Activated CD8-positive, alpha-beta T cell treated with anti-CD3 and anti-CD28 coated beads for 36 hours (primary cell): ENCODE measurements at regions of chr11 and their contacts with region 1.

Region 1: DNA sequence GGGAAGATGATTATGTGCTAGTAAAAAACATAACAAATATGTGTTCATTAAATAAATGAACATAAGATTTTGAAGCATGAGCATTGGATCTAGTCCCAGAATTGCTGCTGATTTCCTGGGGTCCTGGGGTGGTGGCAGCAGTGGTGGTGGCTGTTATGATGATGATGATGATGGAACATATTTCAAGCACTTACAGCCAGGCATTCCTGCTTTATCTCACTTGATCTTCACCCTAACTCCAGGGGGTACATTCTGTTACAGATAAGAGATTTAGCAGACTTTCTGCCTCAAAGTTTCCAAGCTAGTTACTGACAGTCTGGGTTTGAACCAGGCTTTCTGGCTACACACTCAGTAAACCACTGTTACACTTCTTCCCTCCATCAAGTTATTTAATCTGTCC is 5.2 kb downstream of the TRAPPC4 start:
- DNase-seq: no peak
- ATAC-seq: no peak
- H3K4me3 Mint-ChIP-seq: no peak overlapping the region
- H3K27ac Mint-ChIP-seq: peak overlapping the region; percentile 52
- H3K4me1 Mint-ChIP-seq: peaks cover 50% of the 10 kb centered on the region
- H3K27me3 Mint-ChIP-seq: no peaks in the 10 kb centered on the region
- CTCF ChIP-seq: no peak

Region 2: GRCh38 chr11:119044708-119045107 is 21.0 kb after region 1 on chr11:
- CTCF ChIA-PET with region 1: no interaction called
- POLR2A ChIA-PET with region 1: interaction called, 10 read pairs
- intact Hi-C with region 1: no loop called
- DNase-seq: no peak
- ATAC-seq: no peak
- H3K4me3 Mint-ChIP-seq: no peak overlapping the region
- H3K27ac Mint-ChIP-seq: no peak overlapping the region
- H3K4me1 Mint-ChIP-seq: peaks cover 7% of the 10 kb centered on the region
- H3K27me3 Mint-ChIP-seq: no peaks in the 10 kb centered on the region
- CTCF ChIP-seq: peak; percentile 35

Region 3: GRCh38 chr11:119205574-119206510 is 182.1 kb after region 1 on chr11 and contains the start of gene CBL:
- CTCF ChIA-PET with region 1: no interaction called
- POLR2A ChIA-PET with region 1: no interaction called
- intact Hi-C with region 1: no loop called
- DNase-seq: peak; percentile 97
- ATAC-seq: peak; percentile 91
- H3K4me3 Mint-ChIP-seq: peak within 1 kb of the TSS; percentile 90
- H3K27ac Mint-ChIP-seq: peak within 1 kb of the TSS; percentile 93
- H3K4me1 Mint-ChIP-seq: peaks cover 23% of the 10 kb centered on the region
- H3K27me3 Mint-ChIP-seq: no peaks in the 10 kb centered on the region
- CTCF ChIP-seq: peak; percentile 84
- total RNA-seq, gene CBL: 27.0 to 27.5 TPM